WTC11 (cell line): ENCODE measurements at regions of chr17 and their contacts with region 1.

Region 1: DNA sequence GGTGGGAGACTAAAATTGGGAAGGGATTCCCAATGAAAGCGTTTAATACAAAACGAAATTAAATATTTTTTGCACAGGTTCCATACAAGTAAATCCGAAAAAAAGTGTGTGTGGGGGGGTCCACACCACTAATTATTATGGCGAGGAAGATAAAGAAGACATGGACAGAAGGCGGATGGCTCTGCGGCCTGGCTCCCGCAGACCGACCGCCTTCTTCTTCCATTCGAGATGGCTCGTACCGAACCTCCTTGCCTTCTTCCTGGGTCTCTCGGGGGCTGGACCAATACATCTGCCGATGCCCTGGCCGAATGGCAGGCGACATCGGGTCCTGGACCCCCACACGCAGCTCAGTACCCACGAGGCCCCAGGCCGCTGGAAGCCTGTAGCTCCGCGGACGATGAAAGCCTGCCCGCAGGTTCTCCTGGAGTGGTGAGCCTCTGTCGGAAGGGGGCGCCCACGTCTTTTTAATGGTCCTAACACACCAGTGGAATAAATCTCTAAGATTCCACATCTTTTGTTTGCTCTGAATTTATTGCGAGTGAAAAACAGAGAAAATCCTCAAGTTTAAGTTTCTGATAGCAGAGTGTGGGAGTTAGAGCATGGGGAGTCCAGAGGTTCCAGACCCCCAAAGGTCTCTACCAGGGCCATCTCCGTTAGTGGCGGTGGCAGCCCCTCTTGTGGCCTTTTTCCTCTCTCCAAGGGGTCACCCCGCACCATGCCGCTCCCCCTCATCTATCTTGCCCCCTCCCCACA is 1.4 kb downstream of the PRAC2 start:
- DNase-seq: peak; percentile 86
- ATAC-seq: no peak
- H3K4me3 Mint-ChIP-seq: peak overlapping the region; percentile 70
- H3K27ac Mint-ChIP-seq: no peak overlapping the region
- H3K4me1 Mint-ChIP-seq: peaks cover 50% of the 10 kb centered on the region
- H3K27me3 Mint-ChIP-seq: peaks cover 100% of the 10 kb centered on the region
- CTCF ChIP-seq: peak; percentile 49; the same call in 1 of the 2 replicates

Region 2: GRCh38 chr17:48295362-48296288 is 428.8 kb before region 1 on chr17:
- CTCF ChIA-PET with region 1: no interaction called
- POLR2A ChIA-PET with region 1: no interaction called
- DNase-seq: no peak
- ATAC-seq: no peak
- H3K4me3 Mint-ChIP-seq: no peak overlapping the region
- H3K27ac Mint-ChIP-seq: no peak overlapping the region
- H3K4me1 Mint-ChIP-seq: peaks cover 5% of the 10 kb centered on the region
- H3K27me3 Mint-ChIP-seq: no peaks in the 10 kb centered on the region; the same call in 1 of the 2 replicates
- CTCF ChIP-seq: no peak

Region 3: DNA sequence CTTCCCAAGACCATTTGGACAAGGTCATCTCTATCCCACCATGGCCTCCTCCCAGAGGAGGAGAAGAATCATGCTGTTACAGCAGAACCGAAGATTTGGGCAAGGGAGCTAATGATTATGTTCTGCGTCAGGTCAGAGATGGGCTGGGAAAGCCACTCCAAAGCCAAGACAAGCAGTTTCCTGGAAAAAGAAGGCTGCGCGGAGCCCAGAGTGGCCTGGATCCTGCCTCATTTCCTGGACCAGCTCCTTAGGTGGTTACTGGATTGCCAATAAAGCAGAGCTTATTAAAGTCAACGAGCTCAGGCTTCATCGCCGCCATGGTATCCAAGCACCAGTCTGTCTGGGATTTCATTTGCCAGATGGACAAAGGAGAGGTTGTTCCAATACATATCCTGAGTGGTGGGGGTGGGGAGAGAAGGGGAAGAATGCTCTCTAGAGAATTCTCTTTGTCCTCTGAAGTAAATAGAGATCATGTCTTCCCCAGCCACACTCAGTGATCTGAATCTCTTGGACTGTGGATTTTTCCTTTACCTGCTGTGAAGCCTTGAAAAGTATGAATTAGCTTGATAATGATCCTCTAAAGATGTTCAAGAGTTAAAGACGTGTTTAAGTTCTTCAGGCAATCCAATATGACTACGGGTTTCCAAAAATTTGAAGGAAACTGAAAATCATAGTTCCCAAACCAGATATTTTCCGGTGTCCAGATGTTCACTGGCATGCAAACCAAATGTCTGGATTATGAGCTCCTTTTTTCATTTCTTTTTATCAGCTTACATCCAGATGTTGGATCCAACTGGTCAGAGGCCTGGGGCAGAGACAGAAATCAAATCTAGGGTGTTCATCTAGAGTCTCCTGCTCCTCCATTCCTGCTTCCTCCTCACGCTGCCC is 19.8 kb before region 1 on chr17:
- CTCF ChIA-PET with region 1: interaction called, 12 read pairs
- POLR2A ChIA-PET with region 1: no interaction called
- DNase-seq: no peak
- ATAC-seq: no peak
- H3K4me3 Mint-ChIP-seq: no peak overlapping the region
- H3K27ac Mint-ChIP-seq: no peak overlapping the region
- H3K4me1 Mint-ChIP-seq: peaks cover 9% of the 10 kb centered on the region; the same call in 1 of the 2 replicates
- H3K27me3 Mint-ChIP-seq: peaks cover 57% of the 10 kb centered on the region
- CTCF ChIP-seq: no peak

Region 4: GRCh38 chr17:48745381-48746275 is 21.2 kb after region 1 on chr17:
- CTCF ChIA-PET with region 1: interaction called, 25 read pairs
- POLR2A ChIA-PET with region 1: interaction called, 3 read pairs
- DNase-seq: no peak
- ATAC-seq: no peak
- H3K4me3 Mint-ChIP-seq: no peak overlapping the region
- H3K27ac Mint-ChIP-seq: no peak overlapping the region
- H3K4me1 Mint-ChIP-seq: peaks cover 29% of the 10 kb centered on the region
- H3K27me3 Mint-ChIP-seq: peaks cover 100% of the 10 kb centered on the region
- CTCF ChIP-seq: no peak

Region 5: DNA sequence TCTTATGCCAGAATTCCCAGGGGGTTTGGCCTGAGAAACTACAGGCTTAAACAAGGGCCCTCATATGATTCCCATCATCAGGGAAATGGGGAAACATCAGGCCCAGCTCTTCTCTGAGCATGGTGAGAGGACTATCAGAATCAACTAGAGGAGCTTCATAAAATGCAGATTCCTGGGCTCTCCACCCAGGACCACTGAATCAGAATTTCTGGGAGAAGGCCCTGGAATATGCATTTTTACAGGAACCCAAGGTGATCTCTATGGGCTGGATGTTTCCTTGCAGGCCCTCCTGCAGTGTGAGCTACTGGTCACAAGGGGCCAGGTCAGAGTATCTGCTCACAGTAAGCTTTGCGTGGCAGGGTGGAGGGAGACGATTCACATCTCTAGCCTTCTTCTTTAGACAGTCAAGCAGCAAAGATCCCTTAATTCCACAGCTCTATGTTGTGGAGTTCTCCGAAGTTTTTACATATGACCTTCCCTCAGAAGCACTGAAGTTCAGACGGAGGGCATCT is 42.9 kb after region 1 on chr17:
- CTCF ChIA-PET with region 1: interaction called, 14 read pairs
- POLR2A ChIA-PET with region 1: no interaction called
- DNase-seq: no peak
- ATAC-seq: peak; percentile 72
- H3K4me3 Mint-ChIP-seq: no peak overlapping the region
- H3K27ac Mint-ChIP-seq: no peak overlapping the region
- H3K4me1 Mint-ChIP-seq: no peaks in the 10 kb centered on the region
- H3K27me3 Mint-ChIP-seq: peaks cover 57% of the 10 kb centered on the region
- CTCF ChIP-seq: no peak

Region 6: DNA sequence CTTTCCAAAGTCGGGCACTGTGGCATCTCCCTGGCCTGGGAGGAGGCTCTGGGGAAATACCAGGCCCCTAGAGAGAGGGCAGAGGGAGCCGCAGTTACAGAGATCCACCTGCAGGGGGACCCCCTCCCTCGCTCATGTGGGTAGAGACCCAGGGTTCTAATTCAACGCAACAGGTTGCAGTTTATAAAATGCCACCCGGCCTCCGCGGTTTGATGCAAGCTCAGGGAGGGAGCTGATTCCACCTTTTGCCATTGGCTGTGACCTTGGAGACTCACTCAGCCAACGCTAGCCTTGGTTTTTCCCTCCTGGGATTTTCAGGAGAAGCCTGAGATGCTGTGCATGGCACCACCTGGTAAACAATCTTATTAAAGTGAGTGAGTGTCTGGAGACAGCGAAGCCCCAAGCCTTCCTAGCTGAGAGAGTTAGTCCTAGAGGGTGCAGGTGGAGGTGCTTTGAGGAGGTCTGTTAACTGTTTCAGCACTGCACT is 80.5 kb after region 1 on chr17:
- CTCF ChIA-PET with region 1: interaction called, 27 read pairs
- POLR2A ChIA-PET with region 1: interaction called, 3 read pairs
- DNase-seq: peak; percentile 94
- ATAC-seq: peak; percentile 99
- H3K4me3 Mint-ChIP-seq: peak overlapping the region; percentile 24; the same call in 1 of the 2 replicates
- H3K27ac Mint-ChIP-seq: no peak overlapping the region
- H3K4me1 Mint-ChIP-seq: peaks cover 5% of the 10 kb centered on the region
- H3K27me3 Mint-ChIP-seq: no peaks in the 10 kb centered on the region
- CTCF ChIP-seq: peak; percentile 95

Region 7: GRCh38 chr17:48928876-48929811 is 204.7 kb after region 1 on chr17:
- CTCF ChIA-PET with region 1: no interaction called
- POLR2A ChIA-PET with region 1: no interaction called
- DNase-seq: no peak
- ATAC-seq: no peak
- H3K4me3 Mint-ChIP-seq: no peak overlapping the region
- H3K27ac Mint-ChIP-seq: no peak overlapping the region
- H3K4me1 Mint-ChIP-seq: no peaks in the 10 kb centered on the region
- H3K27me3 Mint-ChIP-seq: no peaks in the 10 kb centered on the region
- CTCF ChIP-seq: no peak